ENCODE measurements at regions of chr19 and their contacts with region 1.

Region 1: DNA sequence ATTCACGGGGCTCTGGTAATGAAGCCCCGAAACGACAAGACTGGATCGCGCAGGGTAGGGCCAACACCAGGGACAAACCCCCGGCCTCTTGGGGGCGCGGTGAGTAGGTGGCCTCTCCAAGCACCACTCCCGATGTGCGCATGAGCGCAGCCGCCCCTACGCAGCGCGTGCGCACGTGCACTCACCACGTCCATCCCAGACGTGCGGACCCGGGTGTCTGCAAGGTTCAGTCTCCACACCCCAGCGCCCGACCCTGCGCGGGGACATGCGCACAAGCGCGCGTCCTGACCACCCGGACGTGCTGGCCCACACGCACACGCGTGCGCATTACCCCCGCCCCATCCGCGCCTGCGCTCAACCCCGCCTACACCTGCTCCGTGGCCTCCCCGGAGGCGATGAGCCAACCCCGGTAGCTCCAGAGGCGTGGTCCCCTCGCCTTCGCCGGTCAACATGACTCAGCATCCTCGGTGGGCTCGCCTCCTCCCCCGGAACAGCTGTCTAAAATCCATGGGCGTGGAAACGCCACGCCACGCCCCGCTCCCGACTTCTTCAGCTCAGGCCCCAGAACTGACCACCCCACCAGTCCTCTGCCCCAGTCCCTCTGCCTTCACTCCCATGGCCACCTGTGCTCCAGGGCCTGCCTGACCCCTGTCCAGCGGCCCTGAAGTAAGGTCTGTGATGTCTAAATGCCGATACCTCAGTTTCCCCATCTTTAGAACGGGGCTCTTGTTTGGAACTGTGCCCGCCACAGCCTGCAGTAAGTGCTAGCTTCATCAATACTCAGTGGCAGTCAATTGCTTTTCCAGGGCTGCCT is 5.6 kb upstream of the GPI start:
- DNase-seq: peak; percentile 93 to 100
- H3K4me3 ChIP-seq: peak overlapping the region; percentile 71
- H3K27ac ChIP-seq: peak overlapping the region; percentile 81
- H3K4me1 ChIP-seq: peaks cover 21% of the 10 kb centered on the region
- H3K27me3 ChIP-seq: no peaks in the 10 kb centered on the region
- CTCF ChIP-seq: peak; percentile 62

Region 2: GRCh38 chr19:34184880-34185491 is 174.4 kb before region 1 on chr19:
- CTCF ChIA-PET with region 1: no interaction called
- POLR2A ChIA-PET with region 1: interaction called, 15 read pairs
- intact Hi-C with region 1: no loop called
- DNase-seq: no peak
- H3K4me3 ChIP-seq: no peak overlapping the region
- H3K27ac ChIP-seq: no peak overlapping the region
- H3K4me1 ChIP-seq: peaks cover 29% of the 10 kb centered on the region
- H3K27me3 ChIP-seq: no peaks in the 10 kb centered on the region
- CTCF ChIP-seq: no peak

Region 3: GRCh38 chr19:34288381-34288780 is 71.0 kb before region 1 on chr19:
- CTCF ChIA-PET with region 1: interaction called, 4 read pairs
- POLR2A ChIA-PET with region 1: interaction called, 14 read pairs
- intact Hi-C with region 1: no loop called
- DNase-seq: no peak
- H3K4me3 ChIP-seq: no peak overlapping the region
- H3K27ac ChIP-seq: no peak overlapping the region
- H3K4me1 ChIP-seq: no peaks in the 10 kb centered on the region
- H3K27me3 ChIP-seq: no peaks in the 10 kb centered on the region
- CTCF ChIP-seq: no peak

Region 4: DNA sequence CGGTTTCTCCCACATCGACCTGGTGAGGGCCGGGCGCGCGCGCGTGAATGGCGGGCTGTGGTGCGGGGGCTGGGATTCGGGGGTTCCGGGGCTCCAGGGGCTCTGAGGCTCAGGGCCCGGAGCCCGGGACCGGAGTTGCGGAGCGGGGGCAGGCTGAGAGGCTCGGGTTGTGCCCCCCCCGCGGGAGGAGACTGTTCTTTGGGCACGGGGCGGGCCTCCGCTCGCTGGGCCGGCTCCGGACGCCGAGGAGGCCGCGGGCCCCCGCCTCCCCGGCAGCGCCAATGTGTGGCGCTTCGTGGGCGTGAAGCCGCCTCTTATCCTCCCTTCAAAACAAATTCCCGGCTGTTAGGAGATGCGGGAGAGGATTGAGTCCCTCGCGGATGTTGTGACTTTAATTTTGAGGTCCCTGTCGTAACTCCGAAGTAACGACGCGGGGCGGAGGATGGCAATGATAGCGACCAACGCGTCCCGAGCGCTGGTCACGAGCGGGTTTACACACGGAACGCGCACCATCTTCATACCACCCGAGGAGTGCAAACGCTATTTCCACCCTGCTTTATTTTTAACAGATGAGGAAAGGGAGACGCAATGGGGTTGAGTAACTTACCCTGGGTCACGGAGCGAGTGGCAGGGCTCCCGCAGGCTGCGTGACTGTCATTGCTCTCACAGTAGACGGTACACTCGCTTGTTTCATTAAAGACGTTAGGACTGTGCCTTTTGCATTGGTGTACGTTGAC is 69.4 kb after region 1 on chr19:
- CTCF ChIA-PET with region 1: no interaction called
- POLR2A ChIA-PET with region 1: no interaction called
- intact Hi-C with region 1: loop called (anchors 5 kb)
- DNase-seq: peak in 1 of 2 experiments; percentile 30
- H3K4me3 ChIP-seq: peak overlapping the region; percentile 89
- H3K27ac ChIP-seq: peak overlapping the region; percentile 7
- H3K4me1 ChIP-seq: peaks cover 18% of the 10 kb centered on the region
- H3K27me3 ChIP-seq: no peaks in the 10 kb centered on the region
- CTCF ChIP-seq: no peak

Region 5: DNA sequence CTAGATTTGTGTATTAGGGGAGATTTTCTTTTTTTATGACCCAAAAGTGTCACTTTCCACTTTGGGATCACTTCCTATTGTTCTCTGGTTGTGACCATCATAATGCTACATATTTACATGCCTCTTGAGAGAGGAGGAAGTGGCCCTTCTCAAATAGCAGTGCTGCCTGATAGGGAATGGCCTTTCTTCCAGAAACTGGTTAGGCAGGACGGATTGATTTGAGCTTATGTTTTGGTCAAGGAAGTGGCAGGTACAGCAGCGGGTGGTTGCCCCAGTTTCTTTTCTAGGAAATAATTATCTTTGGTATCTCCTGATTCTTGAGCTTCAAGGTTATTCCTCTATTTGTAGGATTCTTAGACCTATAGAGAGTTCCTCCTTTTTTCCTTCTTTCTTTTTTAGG is 100.3 kb after region 1 on chr19:
- CTCF ChIA-PET with region 1: interaction called, 10 read pairs
- POLR2A ChIA-PET with region 1: no interaction called
- intact Hi-C with region 1: no loop called
- DNase-seq: peak; percentile 51 to 92
- H3K4me3 ChIP-seq: no peak overlapping the region
- H3K27ac ChIP-seq: peak overlapping the region; percentile 28
- H3K4me1 ChIP-seq: peaks cover 22% of the 10 kb centered on the region
- H3K27me3 ChIP-seq: no peaks in the 10 kb centered on the region
- CTCF ChIP-seq: no peak